ENCODE measurements at regions of chr12 and their contacts with region 1.

Region 1: DNA sequence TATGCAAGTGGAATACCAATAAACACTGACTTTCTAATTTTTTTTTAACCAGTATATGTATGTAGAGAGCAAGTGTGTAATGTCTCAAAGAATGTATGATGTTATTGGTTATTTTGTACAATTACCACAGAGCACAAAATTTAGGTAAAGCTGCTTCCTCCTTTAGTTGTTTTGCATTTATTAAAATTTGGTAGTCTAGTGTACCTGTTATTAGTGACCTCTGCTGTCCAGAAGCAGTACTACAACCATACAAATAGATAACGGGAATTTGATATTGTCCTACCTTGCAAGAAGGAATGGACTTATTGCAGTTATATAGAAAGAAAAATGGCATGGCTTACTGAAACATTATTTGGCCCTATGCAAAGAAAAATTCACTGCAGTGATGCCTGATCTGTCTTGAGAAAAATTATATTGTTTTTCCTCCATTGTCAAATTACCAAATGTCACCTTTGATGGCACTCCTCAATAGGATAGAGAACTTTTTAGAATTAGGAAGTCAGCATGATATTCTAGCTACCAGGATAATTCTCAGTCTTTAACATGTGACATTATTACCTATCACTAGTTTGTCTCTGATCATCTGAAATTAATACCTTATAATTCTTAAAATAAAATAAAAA is 153.9 kb upstream of the RMST start:
- DNase-seq: no peak
- ATAC-seq: no peak

Region 2: GRCh38 chr12:96578526-96579125 is 730.1 kb before region 1 on chr12:
- intact Hi-C with region 1: loop called (anchors 2 to 10 kb)
- DNase-seq: no peak
- ATAC-seq: peak in 1 of 2 donors; percentile 49

Region 3: DNA sequence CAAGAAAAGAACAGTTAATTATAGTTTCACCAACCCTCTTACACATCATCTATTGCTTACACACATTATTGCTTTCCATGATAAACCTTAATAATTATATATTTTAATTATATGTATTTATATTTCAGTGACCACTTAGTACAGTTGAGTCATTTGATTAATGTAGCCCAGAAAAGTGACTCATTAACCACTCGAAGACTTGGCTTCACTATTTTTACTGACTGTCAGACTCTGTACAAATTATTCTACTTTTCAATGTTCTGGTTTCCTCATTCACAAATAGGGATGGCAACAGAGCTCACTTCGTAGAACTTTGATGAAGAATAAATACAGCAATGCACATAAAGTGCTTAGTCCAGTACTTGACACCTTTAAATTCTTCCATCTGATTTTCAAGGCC is 721.0 kb before region 1 on chr12:
- intact Hi-C with region 1: loop called in 1 of 2 experiments (anchors 10 kb)
- DNase-seq: no peak
- ATAC-seq: no peak

Region 4: GRCh38 chr12:96985480-96986362 is 323.0 kb before region 1 on chr12:
- intact Hi-C with region 1: loop called in 1 of 2 experiments (anchors 10 kb)
- DNase-seq: peak; percentile 24
- ATAC-seq: peak; percentile 73 to 80

Region 5: DNA sequence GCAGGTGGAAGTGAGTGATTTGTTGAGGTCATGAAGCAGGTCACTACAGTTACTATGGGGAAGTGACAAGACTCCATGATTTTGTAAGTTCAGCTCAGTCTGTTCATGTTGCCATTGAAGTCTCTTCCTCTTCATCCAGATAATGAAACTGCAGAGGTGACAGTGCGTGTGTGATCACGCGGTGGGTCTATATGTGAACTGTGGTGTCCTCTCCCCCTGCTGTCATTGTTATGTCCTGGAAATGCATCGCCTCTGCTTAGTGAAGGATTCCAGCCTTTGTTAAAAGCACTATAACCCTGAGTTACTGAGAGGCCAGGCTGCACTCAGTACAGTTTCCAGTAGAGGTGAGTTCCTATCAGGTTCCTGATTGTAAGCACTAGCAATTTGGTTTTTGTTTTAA is 62.3 kb before region 1 on chr12:
- intact Hi-C with region 1: no loop called
- DNase-seq: no peak
- ATAC-seq: no peak

Region 6: DNA sequence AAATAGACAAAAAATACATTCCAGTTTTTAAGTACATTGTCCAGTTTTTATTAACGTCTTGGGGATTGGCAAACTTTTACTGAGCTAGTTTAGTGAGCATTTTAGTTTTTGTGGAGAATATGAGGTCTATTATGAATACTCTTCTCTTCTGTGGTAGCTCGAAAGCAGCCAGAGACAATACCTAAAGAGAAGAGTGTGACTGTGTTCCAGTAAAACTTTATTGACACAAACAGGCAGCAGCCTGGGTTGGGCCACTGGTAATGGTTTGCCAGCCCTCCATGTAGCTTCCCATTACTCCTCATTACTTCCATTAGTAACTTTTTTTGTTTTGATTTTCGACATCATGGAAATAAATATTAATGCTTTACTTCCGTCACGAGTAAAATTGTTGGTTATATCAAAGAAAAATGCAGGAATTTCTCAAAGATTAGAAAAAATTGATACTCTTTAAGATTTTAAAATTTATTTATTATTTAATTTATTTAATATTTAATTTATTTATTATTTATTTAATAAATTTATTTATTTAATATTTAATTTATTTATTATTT is 173.5 kb after region 1 on chr12:
- intact Hi-C with region 1: no loop called
- DNase-seq: no peak
- ATAC-seq: no peak